ENCODE measurements at regions of chr9 and their contacts with region 1.

Region 1: GRCh38 chr9:127586537-127586936 is 25.5 kb upstream of the STXBP1 start:
- DNase-seq: peak; percentile 26 to 78 (median 64)
- ATAC-seq: peak; percentile 62
- H3K4me3 ChIP-seq: no peak overlapping the region
- H3K4me3 Mint-ChIP-seq: no peak overlapping the region
- H3K27ac ChIP-seq: no peak overlapping the region
- H3K27ac Mint-ChIP-seq: no peak overlapping the region
- H3K4me1 ChIP-seq: no peaks in the 10 kb centered on the region
- H3K4me1 Mint-ChIP-seq: peaks cover 3% of the 10 kb centered on the region
- H3K27me3 ChIP-seq: no peaks in the 10 kb centered on the region
- H3K27me3 Mint-ChIP-seq: peaks cover 13% of the 10 kb centered on the region
- CTCF ChIP-seq: peak; percentile 57

Region 2: DNA sequence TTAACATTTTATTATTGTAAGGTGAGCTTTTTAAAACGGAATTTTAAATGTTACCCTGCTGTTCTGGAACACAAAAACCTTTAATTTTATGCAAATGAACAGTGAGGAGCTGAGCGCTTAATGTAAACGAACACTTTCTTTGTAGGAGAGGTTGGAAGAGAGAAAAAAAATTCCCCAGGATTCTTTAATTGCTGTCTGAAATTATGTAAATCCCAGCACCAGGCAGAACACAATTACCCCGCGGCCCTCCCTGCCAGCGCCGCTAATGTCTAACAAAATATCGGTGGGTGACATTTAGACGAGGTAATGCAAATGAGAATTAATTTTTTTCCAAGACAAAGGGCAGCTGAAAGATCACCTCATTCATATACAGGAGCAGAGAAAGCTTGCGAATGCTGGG is 1403.3 kb before region 1 on chr9:
- CTCF ChIA-PET with region 1: no interaction called
- POLR2A ChIA-PET with region 1: no interaction called
- intact Hi-C with region 1: no loop called
- DNase-seq: no peak
- ATAC-seq: no peak
- H3K4me3 ChIP-seq: no peak overlapping the region
- H3K4me3 Mint-ChIP-seq: no peak overlapping the region
- H3K27ac ChIP-seq: no peak overlapping the region
- H3K27ac Mint-ChIP-seq: no peak overlapping the region
- H3K4me1 ChIP-seq: no peaks in the 10 kb centered on the region
- H3K4me1 Mint-ChIP-seq: no peaks in the 10 kb centered on the region
- H3K27me3 ChIP-seq: peaks cover 0 to 15% of the 10 kb centered on the region in 2 experiments
- H3K27me3 Mint-ChIP-seq: peaks cover 51% of the 10 kb centered on the region
- CTCF ChIP-seq: no peak

Region 3: GRCh38 chr9:127311239-127311741 is 275.2 kb before region 1 on chr9:
- CTCF ChIA-PET with region 1: interaction called, 3 read pairs
- POLR2A ChIA-PET with region 1: no interaction called
- intact Hi-C with region 1: loop called in 1 of 2 experiments (anchors 2 kb)
- DNase-seq: peak in 7 of 9 experiments; percentile 6 to 57 (median 40)
- ATAC-seq: no peak
- H3K4me3 ChIP-seq: no peak overlapping the region
- H3K4me3 Mint-ChIP-seq: no peak overlapping the region
- H3K27ac ChIP-seq: no peak overlapping the region
- H3K27ac Mint-ChIP-seq: no peak overlapping the region
- H3K4me1 ChIP-seq: no peaks in the 10 kb centered on the region
- H3K4me1 Mint-ChIP-seq: no peaks in the 10 kb centered on the region
- H3K27me3 ChIP-seq: no peaks in the 10 kb centered on the region
- H3K27me3 Mint-ChIP-seq: peaks cover 25% of the 10 kb centered on the region
- CTCF ChIP-seq: no peak

Region 4: GRCh38 chr9:127525401-127526187 is 60.9 kb before region 1 on chr9:
- CTCF ChIA-PET with region 1: interaction called, 32 read pairs
- POLR2A ChIA-PET with region 1: no interaction called
- intact Hi-C with region 1: loop called in 1 of 2 experiments (anchors 1 kb)
- DNase-seq: peak in 5 of 9 experiments; percentile 14 to 54 (median 23)
- ATAC-seq: no peak
- H3K4me3 ChIP-seq: no peak overlapping the region
- H3K4me3 Mint-ChIP-seq: no peak overlapping the region
- H3K27ac ChIP-seq: no peak overlapping the region
- H3K27ac Mint-ChIP-seq: no peak overlapping the region
- H3K4me1 ChIP-seq: no peaks in the 10 kb centered on the region
- H3K4me1 Mint-ChIP-seq: no peaks in the 10 kb centered on the region
- H3K27me3 ChIP-seq: no peaks in the 10 kb centered on the region
- H3K27me3 Mint-ChIP-seq: no peaks in the 10 kb centered on the region
- CTCF ChIP-seq: peak; percentile 57

Region 5: DNA sequence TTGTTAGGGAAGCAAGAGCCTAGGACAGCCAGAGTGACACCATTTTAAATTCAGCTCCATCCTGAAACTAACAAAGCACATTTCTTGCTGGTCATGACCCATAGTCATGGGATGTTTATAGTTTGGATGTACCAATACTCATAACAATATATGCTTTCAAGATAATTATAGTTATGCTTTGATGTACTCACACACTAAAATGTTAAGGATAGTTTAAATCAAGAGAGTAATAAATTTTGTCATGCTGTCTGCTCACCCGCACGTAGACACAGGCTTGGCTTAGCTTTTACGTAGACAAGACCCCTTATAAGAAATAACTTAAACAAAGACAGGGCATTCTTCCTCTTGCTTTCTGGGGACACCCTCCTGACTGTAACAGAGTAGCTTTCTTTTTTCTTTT is 16.7 kb after region 1 on chr9:
- CTCF ChIA-PET with region 1: interaction called, 26 read pairs
- POLR2A ChIA-PET with region 1: interaction called, 9 read pairs
- intact Hi-C with region 1: no loop called
- DNase-seq: no peak
- ATAC-seq: no peak
- H3K4me3 ChIP-seq: no peak overlapping the region
- H3K4me3 Mint-ChIP-seq: no peak overlapping the region
- H3K27ac ChIP-seq: no peak overlapping the region
- H3K27ac Mint-ChIP-seq: no peak overlapping the region
- H3K4me1 ChIP-seq: peaks cover 9% of the 10 kb centered on the region
- H3K4me1 Mint-ChIP-seq: peaks cover 8% of the 10 kb centered on the region
- H3K27me3 ChIP-seq: no peaks in the 10 kb centered on the region
- H3K27me3 Mint-ChIP-seq: peaks cover 5% of the 10 kb centered on the region
- CTCF ChIP-seq: no peak

Region 6: GRCh38 chr9:127715394-127716337 is 129.1 kb after region 1 on chr9 and contains the starts of genes PTRH1 and TTC16:
- CTCF ChIA-PET with region 1: interaction called, 10 read pairs
- POLR2A ChIA-PET with region 1: no interaction called
- intact Hi-C with region 1: no loop called
- DNase-seq: peak; percentile 88 to 98 (median 97)
- ATAC-seq: peak; percentile 93
- H3K4me3 ChIP-seq: peak within 1 kb of the TSS; percentile 88 to 96
- H3K4me3 Mint-ChIP-seq: peak within 1 kb of the TSS; percentile 98
- H3K27ac ChIP-seq: peak within 1 kb of the TSS; percentile 80 to 83
- H3K27ac Mint-ChIP-seq: peak within 1 kb of the TSS; percentile 96
- H3K4me1 ChIP-seq: peaks cover 47% of the 10 kb centered on the region
- H3K4me1 Mint-ChIP-seq: peaks cover 44% of the 10 kb centered on the region
- H3K27me3 ChIP-seq: no peaks in the 10 kb centered on the region
- H3K27me3 Mint-ChIP-seq: no peaks in the 10 kb centered on the region
- CTCF ChIP-seq: no peak
- total RNA-seq, gene PTRH1: 4.6 to 5.3 TPM
- total RNA-seq, gene TTC16: 5.2 to 5.5 TPM

Measured in CD8-positive, alpha-beta T cell (primary cell).